ENCODE measurements at regions of chr17 and their contacts with region 1.

Region 1: DNA sequence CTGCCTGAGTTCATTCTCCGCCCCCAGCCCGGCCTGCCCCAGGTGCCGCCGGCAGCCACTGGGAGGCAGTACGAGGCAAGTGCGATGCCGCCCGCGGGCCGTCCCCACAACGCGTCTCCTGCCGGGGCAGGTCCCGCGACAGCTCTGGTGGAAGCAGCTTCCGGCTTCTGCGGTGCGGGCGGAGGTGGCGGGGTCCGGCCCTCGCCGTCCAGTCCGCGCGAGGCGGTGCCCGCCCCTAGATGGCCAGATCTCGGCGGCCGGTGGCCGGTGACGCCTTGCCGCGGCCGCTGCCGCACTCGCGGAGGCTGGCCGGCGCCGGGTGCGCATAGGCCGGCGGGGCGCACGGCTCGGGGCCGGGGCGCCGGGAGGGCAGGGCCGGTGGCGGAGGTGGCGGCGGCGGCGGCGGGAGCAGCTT is 1.8 kb downstream of the GJD3 start:
- DNase-seq: peak; percentile 81
- H3K4me3 ChIP-seq: peak overlapping the region; percentile 59
- H3K27ac ChIP-seq: no peak overlapping the region
- H3K4me1 ChIP-seq: no peaks in the 10 kb centered on the region
- H3K27me3 ChIP-seq: no peaks in the 10 kb centered on the region
- CTCF ChIP-seq: peak; percentile 57

Region 2: GRCh38 chr17:38454516-38454915 is 1908.2 kb before region 1 on chr17:
- intact Hi-C with region 1: no loop called
- DNase-seq: no peak
- H3K4me3 ChIP-seq: no peak overlapping the region
- H3K27ac ChIP-seq: no peak overlapping the region
- H3K4me1 ChIP-seq: no peaks in the 10 kb centered on the region
- H3K27me3 ChIP-seq: no peaks in the 10 kb centered on the region
- CTCF ChIP-seq: no peak

Region 3: DNA sequence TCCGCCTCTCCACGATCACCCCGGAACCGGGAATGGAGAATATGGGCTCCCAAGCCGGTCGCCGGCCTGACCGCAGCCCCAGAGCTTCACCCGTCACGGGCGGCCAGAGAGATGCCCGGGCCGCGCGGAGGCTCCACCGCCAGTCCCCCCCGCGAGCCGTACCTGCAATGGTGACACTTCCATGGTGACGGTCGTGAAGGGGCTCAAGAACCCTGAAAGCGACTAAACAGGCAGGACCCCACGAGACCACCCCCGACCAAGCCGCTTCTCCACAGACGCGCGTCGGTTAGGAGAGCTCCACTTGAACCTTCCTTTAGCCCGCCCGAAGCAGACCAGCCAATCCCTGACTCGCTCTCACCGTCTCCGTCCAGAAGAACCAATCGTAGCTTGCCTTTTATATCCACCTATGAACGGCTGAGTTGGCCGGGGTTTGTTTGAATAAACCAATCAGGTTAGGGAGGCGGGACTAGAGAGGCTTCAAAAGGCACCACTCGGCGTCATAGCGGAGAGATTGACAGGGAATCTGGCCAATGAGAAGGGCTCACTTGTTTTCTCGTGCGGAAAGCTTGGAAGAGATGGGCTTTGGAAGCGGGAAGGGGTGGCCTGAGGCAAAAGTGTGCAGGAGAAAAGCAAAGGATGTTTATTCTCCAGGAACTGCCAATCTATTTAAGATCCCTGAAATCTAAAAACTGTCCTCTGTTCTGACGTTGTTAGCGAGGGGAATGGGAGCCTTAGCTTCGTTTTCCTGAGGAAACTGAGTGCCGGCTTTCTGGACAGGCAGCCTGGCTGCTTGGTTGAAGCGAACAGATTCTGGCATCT is 55.1 kb after region 1 on chr17 and contains the start of gene TOP2A:
- intact Hi-C with region 1: loop called (anchors 5 kb)
- DNase-seq: peak; percentile 100
- H3K4me3 ChIP-seq: peak within 1 kb of the TSS; percentile 66
- H3K27ac ChIP-seq: peak within 1 kb of the TSS; percentile 52
- H3K4me1 ChIP-seq: no peaks in the 10 kb centered on the region
- H3K27me3 ChIP-seq: no peaks in the 10 kb centered on the region
- CTCF ChIP-seq: no peak
- total RNA-seq, gene TOP2A: 46.2 to 124 TPM

Region 4: GRCh38 chr17:40532520-40533204 is 170.0 kb after region 1 on chr17:
- intact Hi-C with region 1: loop called (anchors 2 kb)
- DNase-seq: no peak
- H3K4me3 ChIP-seq: no peak overlapping the region
- H3K27ac ChIP-seq: peak overlapping the region; percentile 45
- H3K4me1 ChIP-seq: peaks cover 6% of the 10 kb centered on the region
- H3K27me3 ChIP-seq: no peaks in the 10 kb centered on the region
- CTCF ChIP-seq: no peak

Region 5: DNA sequence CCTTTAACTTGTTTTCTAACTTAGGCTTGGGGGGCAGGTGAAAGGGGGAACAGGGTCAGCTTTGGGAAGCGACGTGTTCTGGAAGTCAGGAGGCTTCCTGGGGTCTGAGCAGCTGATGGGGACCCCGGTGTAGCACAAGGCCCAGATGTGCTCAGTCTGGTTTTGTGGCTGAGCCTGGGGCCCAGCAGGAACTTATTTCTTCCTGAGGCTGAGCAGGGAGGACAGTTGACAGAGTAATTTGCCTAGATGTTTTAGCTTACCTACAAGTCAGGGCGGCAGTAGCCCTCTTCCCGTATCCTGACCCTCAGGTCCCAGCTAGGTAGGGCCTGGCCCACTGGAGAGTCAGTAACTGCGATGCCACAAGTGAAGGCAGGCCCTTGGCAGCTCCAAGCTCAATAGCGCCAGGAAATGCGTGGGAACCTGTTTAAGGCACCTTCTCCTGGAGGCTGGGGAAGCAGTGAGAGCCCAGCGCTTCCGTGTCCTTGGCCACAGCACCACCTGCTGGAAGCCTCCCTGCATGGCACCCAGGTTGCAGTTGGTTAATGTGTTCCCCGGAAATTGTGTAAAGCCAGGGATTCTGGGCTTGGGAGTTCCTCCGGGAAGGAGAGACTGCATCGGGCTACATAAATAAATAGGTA is 197.4 kb after region 1 on chr17:
- intact Hi-C with region 1: loop called (anchors 2 kb)
- DNase-seq: peak; percentile 95
- H3K4me3 ChIP-seq: peak overlapping the region; percentile 20
- H3K27ac ChIP-seq: peak overlapping the region; percentile 51
- H3K4me1 ChIP-seq: peaks cover 9% of the 10 kb centered on the region
- H3K27me3 ChIP-seq: no peaks in the 10 kb centered on the region
- CTCF ChIP-seq: peak; percentile 97

Region 6: DNA sequence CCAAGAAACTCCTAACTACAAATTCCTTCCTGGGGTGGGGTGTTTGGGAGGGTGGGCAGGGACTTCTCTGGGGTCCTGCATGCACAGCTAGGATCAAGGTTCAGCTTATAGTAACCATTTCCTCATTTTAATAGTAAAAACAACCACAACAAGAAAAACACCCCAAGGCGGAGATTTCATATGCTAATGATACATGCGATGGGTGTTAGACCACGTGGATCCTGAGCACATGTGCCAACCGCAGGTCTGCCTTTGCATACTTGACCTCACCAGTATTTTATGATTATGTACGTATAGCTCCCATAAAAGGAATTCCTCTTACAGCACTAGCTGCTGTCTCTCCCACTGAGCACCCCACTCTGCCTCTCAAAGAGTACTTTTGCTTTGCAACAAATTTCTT is 753.6 kb after region 1 on chr17:
- intact Hi-C with region 1: no loop called
- DNase-seq: no peak
- H3K4me3 ChIP-seq: no peak overlapping the region
- H3K27ac ChIP-seq: no peak overlapping the region
- H3K4me1 ChIP-seq: no peaks in the 10 kb centered on the region
- H3K27me3 ChIP-seq: no peaks in the 10 kb centered on the region
- CTCF ChIP-seq: no peak

Measured in colonic mucosa (tissue), 4 donors.